ENCODE measurements at regions of chr12 and their contacts with region 1.

Region 1: DNA sequence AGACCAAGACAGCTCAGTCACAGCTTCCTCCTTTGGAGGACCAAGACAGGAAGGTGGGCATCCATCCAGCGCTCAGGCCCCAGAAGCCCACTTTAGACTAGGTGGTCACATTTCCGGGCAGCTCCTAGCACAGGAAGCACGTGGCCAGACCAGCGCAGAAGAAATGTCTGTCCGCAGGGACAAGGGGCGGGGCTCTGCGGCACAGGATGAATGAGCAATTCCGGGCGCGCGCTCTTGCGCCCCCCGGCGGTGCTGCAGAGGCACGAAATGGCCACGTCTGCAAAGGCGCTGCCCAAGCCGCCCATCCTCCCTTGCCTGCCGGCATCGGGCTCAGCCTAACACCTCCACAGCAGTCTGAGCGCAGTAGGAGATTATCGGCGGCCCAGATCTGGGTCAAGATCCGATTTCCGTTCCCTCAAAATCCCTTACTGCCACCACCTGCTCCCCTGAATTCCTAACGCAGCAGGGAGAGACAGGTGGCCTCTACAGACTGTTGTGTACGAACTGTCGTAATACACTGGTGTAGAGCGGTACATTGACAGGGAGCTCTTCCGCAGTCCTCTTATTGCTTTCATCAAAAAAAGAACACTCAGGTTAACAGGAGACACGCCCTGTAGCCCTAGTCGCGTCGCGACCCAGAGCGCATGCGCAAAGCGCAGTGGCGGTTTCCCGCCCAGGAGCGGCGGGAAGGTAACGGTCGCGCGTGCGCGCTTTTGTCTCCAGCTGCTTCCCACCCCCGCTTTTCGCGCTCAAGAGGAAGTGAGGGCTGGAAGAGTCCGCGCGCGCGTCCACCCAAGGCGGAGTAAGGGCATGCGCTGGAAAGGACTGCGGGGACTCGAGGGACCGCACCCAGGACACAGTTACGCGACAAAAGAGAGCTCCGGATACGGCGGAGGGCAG is 794 bp downstream of the TUBA1B start:
- DNase-seq: peak; percentile 85 to 94
- H3K4me3 ChIP-seq: peak overlapping the region; percentile 91 to 100 (median 94)
- H3K27ac ChIP-seq: peak overlapping the region; percentile 94
- H3K4me1 ChIP-seq: peaks cover 0 to 4% (median 2%) of the 10 kb centered on the region in 4 experiments; a peak in 4 of 7 replicates
- H3K27me3 ChIP-seq: no peaks in the 10 kb centered on the region
- CTCF ChIP-seq: peak; percentile 79 to 98 (median 94)
- EP300 ChIP-seq: peak in 1 of 2 experiments; percentile 28; a peak in 1 of 3 replicates
- POLR2A ChIP-seq: peak; percentile 32 to 85
- RAD21 ChIP-seq: peak; percentile 47 to 55

Region 2: DNA sequence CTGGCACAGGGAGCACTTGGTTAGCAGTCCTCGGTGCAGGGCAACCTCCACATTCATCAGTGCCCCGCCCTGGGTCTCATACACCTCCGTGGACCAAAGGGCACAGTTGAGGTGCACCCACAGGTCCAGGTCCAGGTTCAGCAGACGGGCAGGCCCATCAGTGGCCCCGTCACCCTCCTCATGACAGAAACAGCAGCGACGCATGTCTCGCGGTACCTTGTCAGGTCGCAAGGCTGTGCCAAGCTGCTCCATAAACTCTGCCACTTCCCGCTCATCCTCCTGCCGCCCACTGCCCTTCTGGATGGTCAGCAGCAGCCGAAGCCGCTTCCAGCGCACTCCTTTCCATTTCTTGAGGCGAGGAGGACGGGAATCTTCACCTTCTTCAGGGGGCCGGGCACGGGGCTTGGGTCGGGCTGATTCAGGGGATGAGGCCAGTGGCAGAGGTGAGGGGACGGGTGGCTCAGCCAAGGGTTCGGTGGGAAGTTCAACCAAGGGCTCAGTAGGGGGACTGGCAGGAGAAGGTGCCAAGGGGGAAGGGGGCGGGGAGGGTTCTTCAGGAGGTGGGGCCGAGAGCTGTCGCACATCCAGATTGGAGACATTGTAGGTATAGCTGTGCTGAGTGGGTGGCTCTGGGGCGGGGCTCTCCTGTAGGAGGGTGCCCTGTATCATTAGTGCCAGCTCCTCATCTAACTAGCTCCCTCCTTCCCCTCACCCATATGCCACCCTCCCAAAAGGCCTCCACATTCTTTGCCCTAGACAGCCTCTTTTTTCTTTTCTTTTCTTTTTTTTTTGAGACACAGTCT is 103.5 kb before region 1 on chr12:
- CTCF ChIA-PET with region 1: no interaction called
- POLR2A ChIA-PET with region 1: no interaction called
- DNase-seq: no peak
- H3K4me3 ChIP-seq: no peak overlapping the region
- H3K27ac ChIP-seq: no peak overlapping the region
- H3K4me1 ChIP-seq: no peaks in the 10 kb centered on the region
- H3K27me3 ChIP-seq: no peaks in the 10 kb centered on the region
- CTCF ChIP-seq: no peak
- EP300 ChIP-seq: no peak
- POLR2A ChIP-seq: no peak
- RAD21 ChIP-seq: no peak

Region 3: DNA sequence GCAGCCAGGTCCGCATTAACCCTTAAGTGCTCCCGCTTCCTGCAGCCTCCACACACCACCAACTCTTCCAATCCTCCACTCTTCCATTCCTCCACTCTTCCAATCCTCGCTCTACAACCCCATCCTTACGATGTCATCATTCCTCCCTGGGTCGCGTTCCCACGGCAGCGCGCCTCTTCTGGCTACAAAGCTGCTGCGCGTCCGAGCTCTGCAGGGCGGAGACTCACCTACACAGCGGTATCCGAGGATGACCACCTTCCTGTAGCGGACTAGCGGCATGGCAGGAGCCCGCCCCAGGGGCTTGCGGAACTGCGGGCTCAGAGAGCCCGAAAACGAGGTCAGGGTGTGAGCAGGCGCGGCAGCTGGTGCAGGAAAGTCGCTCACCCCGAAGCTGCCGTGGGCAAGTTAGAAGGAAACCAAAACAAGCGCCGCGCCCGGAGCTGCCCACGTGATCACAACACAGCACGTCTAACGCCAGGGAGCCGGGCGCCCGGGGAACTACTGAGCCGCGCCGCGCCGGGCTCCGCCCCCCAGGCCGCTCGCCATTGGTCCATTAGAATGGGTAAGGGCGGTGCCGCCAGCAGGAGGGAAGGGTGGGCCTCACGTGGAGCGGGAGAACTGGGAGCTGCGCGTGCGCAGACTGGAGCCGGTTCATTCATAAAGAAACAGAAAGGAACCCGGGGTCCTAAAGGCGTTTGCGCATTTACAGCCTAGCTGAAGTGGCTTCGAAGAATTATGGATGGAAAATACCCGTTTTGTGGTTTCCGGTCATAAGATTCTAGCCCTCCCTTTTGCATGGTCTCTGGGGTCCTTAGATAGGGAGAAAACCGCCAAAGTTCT is 60.7 kb before region 1 on chr12 and contains the start of gene RHEBL1:
- CTCF ChIA-PET with region 1: interaction called, 17 read pairs
- POLR2A ChIA-PET with region 1: interaction called, 32 read pairs
- DNase-seq: peak; percentile 86 to 98
- H3K4me3 ChIP-seq: peak within 1 kb of the TSS; percentile 70 to 93 (median 80)
- H3K27ac ChIP-seq: no peak within 1 kb of the TSS
- H3K4me1 ChIP-seq: peaks cover 2 to 6% (median 4%) of the 10 kb centered on the region in 4 experiments; a peak in 5 of 7 replicates
- H3K27me3 ChIP-seq: peaks cover 0 to 8% (median 3%) of the 10 kb centered on the region in 4 experiments; a peak in 5 of 7 replicates
- CTCF ChIP-seq: no peak
- EP300 ChIP-seq: no peak
- POLR2A ChIP-seq: no peak
- RAD21 ChIP-seq: no peak
- total RNA-seq, gene RHEBL1: 7.0 and 7.5 TPM in 2 replicates

Region 4: GRCh38 chr12:49098035-49098451 is 32.4 kb before region 1 on chr12:
- CTCF ChIA-PET with region 1: interaction called, 16 read pairs
- POLR2A ChIA-PET with region 1: interaction called, 66 read pairs
- DNase-seq: peak in 1 of 2 experiments; percentile 88
- H3K4me3 ChIP-seq: no peak overlapping the region
- H3K27ac ChIP-seq: no peak overlapping the region
- H3K4me1 ChIP-seq: peaks cover 0 to 11% (median 8%) of the 10 kb centered on the region in 4 experiments; a peak in 4 of 7 replicates
- H3K27me3 ChIP-seq: peaks cover 13 to 24% (median 23%) of the 10 kb centered on the region in 4 experiments
- CTCF ChIP-seq: peak; percentile 87 to 96 (median 91)
- EP300 ChIP-seq: no peak
- POLR2A ChIP-seq: no peak
- RAD21 ChIP-seq: peak; percentile 70 to 79

Region 5: GRCh38 chr12:49146406-49146805 is 16.0 kb after region 1 on chr12:
- CTCF ChIA-PET with region 1: interaction called, 6 read pairs
- POLR2A ChIA-PET with region 1: interaction called, 132 read pairs
- DNase-seq: no peak
- H3K4me3 ChIP-seq: no peak overlapping the region
- H3K27ac ChIP-seq: no peak overlapping the region
- H3K4me1 ChIP-seq: no peaks in the 10 kb centered on the region
- H3K27me3 ChIP-seq: no peaks in the 10 kb centered on the region
- CTCF ChIP-seq: no peak
- EP300 ChIP-seq: no peak
- POLR2A ChIP-seq: no peak
- RAD21 ChIP-seq: no peak

Region 6: GRCh38 chr12:49188914-49189367 is 58.5 kb after region 1 on chr12 and contains the start of gene TUBA1A:
- CTCF ChIA-PET with region 1: interaction called, 9 read pairs
- POLR2A ChIA-PET with region 1: interaction called, 48 read pairs
- DNase-seq: peak; percentile 89 to 95
- H3K4me3 ChIP-seq: peak within 1 kb of the TSS; percentile 57 to 93 (median 84)
- H3K27ac ChIP-seq: peak within 1 kb of the TSS; percentile 76
- H3K4me1 ChIP-seq: no peaks in the 10 kb centered on the region; a peak in 2 of 7 replicates
- H3K27me3 ChIP-seq: no peaks in the 10 kb centered on the region
- CTCF ChIP-seq: no peak
- EP300 ChIP-seq: no peak
- POLR2A ChIP-seq: peak; percentile 93 to 96
- RAD21 ChIP-seq: no peak
- total RNA-seq, gene TUBA1A: 283 and 290 TPM in 2 replicates

Region 7: DNA sequence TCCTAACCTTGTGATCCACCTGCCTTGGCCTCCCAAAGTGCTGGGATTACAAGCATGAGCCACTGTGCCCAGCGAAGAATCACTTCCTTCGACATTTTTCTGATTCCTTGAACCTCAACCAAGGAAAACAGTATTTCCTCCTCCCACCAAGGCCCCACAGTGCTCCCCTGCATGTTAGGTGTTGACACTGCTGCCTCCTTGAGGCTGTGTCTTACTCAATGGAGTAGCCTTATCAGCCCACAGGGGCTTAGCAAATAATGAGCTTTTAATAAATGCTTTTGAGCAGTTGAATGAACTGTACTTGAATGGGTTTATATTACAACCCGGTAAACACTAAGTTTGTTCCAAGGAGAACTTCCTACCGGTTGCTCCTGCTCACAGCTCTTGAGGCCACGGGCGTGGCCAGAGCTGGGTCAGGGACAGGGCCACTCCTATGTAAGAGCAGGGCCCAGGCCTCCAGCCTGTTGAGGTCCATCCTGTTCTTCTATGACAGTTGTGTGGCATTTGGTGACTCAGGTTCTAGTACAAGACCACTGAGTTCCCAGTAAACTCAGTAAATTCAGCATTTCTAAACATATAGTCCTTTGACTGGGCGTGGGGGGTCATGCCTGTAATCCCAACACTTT is 95.3 kb after region 1 on chr12:
- CTCF ChIA-PET with region 1: interaction called, 8 read pairs
- POLR2A ChIA-PET with region 1: interaction called, 20 read pairs
- DNase-seq: no peak
- H3K4me3 ChIP-seq: no peak overlapping the region
- H3K27ac ChIP-seq: no peak overlapping the region
- H3K4me1 ChIP-seq: no peaks in the 10 kb centered on the region
- H3K27me3 ChIP-seq: no peaks in the 10 kb centered on the region
- CTCF ChIP-seq: peak; percentile 19 to 41 (median 28); a peak in 2 of 4 replicates
- EP300 ChIP-seq: no peak
- POLR2A ChIP-seq: no peak
- RAD21 ChIP-seq: peak; percentile 46 to 58

Region 8: GRCh38 chr12:49548822-49549648 is 418.6 kb after region 1 on chr12:
- CTCF ChIA-PET with region 1: no interaction called
- POLR2A ChIA-PET with region 1: no interaction called
- DNase-seq: peak in 1 of 2 experiments; percentile 73
- H3K4me3 ChIP-seq: peak overlapping the region; percentile 22 to 56 (median 34)
- H3K27ac ChIP-seq: no peak overlapping the region
- H3K4me1 ChIP-seq: peaks cover 0 to 22% (median 16%) of the 10 kb centered on the region in 4 experiments; a peak in 6 of 7 replicates
- H3K27me3 ChIP-seq: peaks cover 10 to 72% (median 61%) of the 10 kb centered on the region in 4 experiments
- CTCF ChIP-seq: peak in 2 of 3 experiments; percentile 24 to 34; a peak in 2 of 4 replicates
- EP300 ChIP-seq: no peak
- POLR2A ChIP-seq: no peak
- RAD21 ChIP-seq: peak in 1 of 2 experiments; percentile 33; a peak in 2 of 4 replicates